GM13976 (cell line): ENCODE measurements at regions of chr2 and their contacts with region 1.

Region 1: GRCh38 chr2:199985625-199986207 is 30.3 kb downstream of the MAIP1 start:
- DNase-seq: no peak
- CTCF ChIP-seq: peak; percentile 38

Region 2: GRCh38 chr2:200471324-200471848 is 485.7 kb after region 1 on chr2:
- in situ Hi-C with region 1: loop called (anchors 5 kb)
- DNase-seq: peak; percentile 76
- CTCF ChIP-seq: peak; percentile 25

Region 3: DNA sequence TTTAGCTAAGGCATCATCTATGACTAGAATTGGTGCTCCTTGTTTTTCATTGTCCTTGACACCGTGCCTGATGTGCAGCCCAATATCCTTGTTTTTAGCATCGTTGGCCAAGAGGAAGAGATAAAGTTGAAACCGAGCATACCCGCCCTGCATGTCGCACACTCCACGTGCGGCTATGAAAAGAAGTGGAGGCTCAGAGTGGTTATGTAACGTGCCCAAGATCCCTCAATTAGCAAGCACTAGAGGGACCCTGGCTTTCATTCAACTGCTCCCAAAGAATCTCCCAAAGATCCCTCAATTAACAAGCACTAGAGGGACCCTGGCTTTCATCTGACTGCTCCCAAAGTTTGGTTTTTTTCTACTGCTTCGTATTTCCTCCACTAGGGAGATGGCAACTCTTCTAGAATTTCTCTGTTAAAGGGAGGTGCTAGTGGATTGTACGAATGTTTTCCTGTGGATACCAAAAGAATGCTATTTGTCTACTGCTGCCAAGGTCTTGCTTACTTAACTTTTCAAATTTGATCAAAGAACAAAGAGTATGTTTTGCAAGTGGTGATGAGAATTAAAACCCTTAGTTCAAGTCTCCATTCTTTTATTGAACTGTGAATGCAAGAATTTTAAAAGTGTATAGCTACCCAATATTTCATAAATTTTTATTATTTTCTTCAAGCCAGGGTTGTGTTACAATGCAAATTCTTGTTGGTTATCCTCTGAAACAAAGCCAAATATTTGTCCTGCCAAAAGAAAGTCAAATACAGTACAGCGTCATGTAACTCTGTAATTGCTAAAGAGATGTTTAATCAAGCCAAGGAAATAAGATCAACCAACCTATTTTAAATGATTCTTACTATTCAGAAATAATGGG is 692.2 kb after region 1 on chr2:
- in situ Hi-C with region 1: no loop called
- DNase-seq: no peak
- CTCF ChIP-seq: no peak

Region 4: DNA sequence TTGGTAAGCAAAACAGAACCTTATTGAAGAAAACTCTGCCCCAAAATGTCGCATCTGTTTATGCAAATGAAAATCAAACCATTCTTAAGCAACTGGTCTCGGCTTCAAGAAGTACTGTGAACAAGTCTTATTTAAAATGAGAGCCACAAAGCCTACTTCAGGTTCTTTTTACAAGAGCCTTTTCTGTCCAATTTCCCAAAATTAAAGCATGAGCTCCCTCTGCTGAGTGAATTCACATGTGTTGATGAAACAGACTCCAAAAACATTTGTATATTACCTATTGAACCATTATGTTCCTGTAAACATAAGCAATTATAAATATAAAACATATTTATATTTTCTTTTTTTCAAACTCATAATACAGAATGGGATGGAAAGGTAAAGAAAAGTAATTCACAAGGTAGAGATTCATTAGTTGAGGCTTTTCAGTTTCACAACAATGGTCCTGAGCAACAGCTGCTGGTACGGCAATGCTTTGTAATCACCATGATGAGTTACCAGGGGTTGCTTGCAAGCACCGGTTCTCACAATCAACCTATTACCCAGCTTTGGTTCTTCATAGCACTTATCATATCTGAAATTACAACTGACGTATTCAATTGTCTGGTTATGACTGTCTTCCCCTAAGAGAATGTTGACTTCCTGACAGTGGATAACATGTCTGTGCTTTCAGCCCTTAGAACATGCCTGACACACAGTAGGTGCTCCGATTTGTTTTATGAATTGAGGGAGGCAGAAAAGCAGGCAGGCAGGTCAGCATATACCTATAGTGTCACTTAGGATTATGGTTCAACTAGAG is 717.6 kb after region 1 on chr2:
- in situ Hi-C with region 1: loop called (anchors 10 kb)
- DNase-seq: peak; percentile 18
- CTCF ChIP-seq: peak; percentile 36